ENCODE measurements at regions of chr9 and their contacts with region 1.

Region 1: DNA sequence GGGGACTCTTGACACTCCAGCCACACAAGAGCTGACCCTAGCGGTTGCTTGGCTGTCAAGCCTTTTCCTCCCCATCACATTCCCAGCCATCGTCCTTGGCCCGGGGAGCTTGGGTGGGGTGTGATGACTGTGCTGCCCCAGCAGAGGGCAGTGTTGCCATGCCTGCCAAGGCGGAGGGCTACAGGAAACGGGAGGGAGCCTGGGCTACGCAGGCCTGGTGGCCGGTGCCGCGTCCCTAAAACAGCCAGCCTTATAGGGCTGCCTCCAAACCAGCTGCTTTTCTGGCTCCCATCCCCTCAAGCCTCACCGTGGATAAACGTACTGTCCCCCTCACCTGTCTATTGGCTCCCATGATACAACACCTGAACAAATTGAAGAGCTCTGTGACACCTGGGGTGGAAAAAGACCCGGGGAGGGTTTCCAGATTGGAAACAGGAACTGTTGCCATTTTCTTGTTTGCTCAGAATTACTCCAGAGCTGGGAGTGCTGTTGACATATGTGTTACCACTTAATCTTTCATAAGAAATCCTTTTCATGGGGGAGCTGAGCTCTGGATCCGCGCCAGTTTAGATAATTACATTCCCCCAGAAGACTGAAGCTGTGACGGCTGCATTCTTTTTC is 72.8 kb upstream of the ASTN2 start:
- DNase-seq: peak; percentile 64
- H3K4me3 ChIP-seq: no peak overlapping the region
- H3K27ac ChIP-seq: no peak overlapping the region
- H3K4me1 ChIP-seq: no peaks in the 10 kb centered on the region
- H3K27me3 ChIP-seq: no peaks in the 10 kb centered on the region
- CTCF ChIP-seq: peak; percentile 88 to 95
- POLR2A ChIP-seq: no peak

Region 2: GRCh38 chr9:117555964-117556629 is 68.4 kb after region 1 on chr9:
- CTCF ChIA-PET with region 1: interaction called, 9 read pairs
- POLR2A ChIA-PET with region 1: no interaction called
- dilution Hi-C with region 1: no loop called
- intact Hi-C with region 1: loop called (anchors 1 kb)
- DNase-seq: peak; percentile 44
- H3K4me3 ChIP-seq: no peak overlapping the region
- H3K27ac ChIP-seq: no peak overlapping the region
- H3K4me1 ChIP-seq: no peaks in the 10 kb centered on the region
- H3K27me3 ChIP-seq: no peaks in the 10 kb centered on the region
- CTCF ChIP-seq: peak; percentile 65 to 74
- POLR2A ChIP-seq: no peak